ENCODE measurements at regions of chr15 and their contacts with region 1.

Region 1: DNA sequence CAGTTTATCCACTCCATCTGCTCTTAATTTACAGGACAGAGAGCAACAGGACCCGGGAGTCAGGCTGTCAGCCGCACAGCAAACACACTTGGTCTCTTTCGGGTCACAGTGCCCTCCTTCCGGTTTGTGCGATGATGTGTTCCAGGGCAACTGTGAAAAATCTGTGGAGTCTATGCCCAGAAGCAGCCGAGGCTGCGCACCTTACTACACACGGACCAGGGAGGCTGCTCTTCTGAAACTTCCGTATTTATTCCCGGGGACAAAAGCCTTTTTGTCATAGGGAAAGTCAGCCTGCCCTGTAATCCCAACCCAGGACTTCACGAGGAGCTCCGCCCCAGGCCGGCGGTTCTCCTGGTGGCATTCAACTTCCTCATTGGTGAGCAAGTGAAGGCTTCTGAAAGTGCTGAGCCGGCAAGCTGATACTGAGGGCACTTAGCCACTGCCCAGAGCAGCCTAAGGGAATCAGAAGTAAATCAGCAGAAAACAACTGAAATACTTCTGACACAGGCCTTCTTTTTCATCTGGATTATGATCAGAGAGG is 126.5 kb downstream of the FMN1 start:
- DNase-seq: peak; percentile 73
- H3K4me3 ChIP-seq: peak overlapping the region; percentile 8 to 23 (median 9)
- H3K27ac ChIP-seq: peak overlapping the region; percentile 84
- H3K4me1 ChIP-seq: peaks cover 33% of the 10 kb centered on the region
- H3K27me3 ChIP-seq: no peaks in the 10 kb centered on the region
- CTCF ChIP-seq: no peak

Region 2: DNA sequence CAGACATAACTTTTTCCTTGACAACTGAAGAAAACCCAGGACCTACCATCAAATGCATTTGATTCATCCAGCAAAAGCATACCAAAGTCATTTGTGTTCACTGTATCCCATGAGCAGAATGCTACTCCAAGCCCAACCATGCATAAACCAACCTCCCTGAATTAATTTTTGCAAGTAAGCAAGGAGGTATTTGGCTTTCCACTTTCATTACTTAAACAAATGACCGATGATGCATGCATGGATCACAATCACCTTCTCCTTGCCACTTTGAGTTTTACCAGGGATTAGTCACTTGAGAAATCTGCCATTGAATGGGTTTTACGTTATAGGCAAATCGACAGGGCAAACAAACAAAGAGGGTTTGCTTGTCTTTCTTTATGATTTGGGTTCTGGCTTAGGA is 88.3 kb before region 1 on chr15:
- CTCF ChIA-PET with region 1: no interaction called
- dilution Hi-C with region 1: loop called (anchors 5 kb)
- in situ Hi-C with region 1: no loop called
- intact Hi-C with region 1: no loop called
- DNase-seq: peak; percentile 61
- H3K4me3 ChIP-seq: no peak overlapping the region
- H3K27ac ChIP-seq: no peak overlapping the region
- H3K4me1 ChIP-seq: no peaks in the 10 kb centered on the region
- H3K27me3 ChIP-seq: no peaks in the 10 kb centered on the region
- CTCF ChIP-seq: no peak

Region 3: DNA sequence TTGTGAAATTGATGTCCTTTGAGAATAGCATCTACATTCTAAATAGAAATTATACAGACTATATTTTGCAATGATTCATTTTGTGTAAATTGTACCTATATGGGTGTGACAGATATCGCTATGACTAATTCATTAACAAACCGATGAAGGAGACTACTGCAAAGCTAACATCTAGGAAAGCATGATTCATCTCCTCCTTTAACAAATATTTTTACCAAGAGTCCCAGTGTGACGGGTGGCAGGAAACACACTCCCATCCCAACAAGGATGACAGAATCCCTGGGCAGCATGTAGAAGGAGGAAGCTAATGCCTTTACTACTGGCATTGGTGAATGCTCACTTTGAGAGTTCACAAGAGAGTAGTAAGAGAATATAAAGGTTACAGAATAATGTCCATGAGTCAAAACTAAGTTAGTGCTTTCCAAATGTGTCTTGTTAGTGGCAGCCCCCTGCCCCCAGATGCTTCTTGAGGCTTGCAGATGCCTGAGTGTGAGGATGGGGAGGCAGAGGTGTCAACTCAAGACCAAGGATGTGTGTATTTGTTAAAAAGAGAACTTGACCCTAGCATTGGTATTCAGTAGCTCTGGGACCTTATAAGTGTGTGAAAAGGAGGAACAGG is 54.1 kb before region 1 on chr15:
- CTCF ChIA-PET with region 1: interaction called, 3 read pairs
- dilution Hi-C with region 1: loop called (anchors 5 kb)
- in situ Hi-C with region 1: no loop called
- intact Hi-C with region 1: no loop called
- DNase-seq: peak; percentile 88
- H3K4me3 ChIP-seq: no peak overlapping the region
- H3K27ac ChIP-seq: peak overlapping the region; percentile 26
- H3K4me1 ChIP-seq: peaks cover 10% of the 10 kb centered on the region
- H3K27me3 ChIP-seq: no peaks in the 10 kb centered on the region
- CTCF ChIP-seq: no peak

Region 4: GRCh38 chr15:33029109-33029652 is 38.8 kb before region 1 on chr15:
- CTCF ChIA-PET with region 1: no interaction called
- dilution Hi-C with region 1: no loop called
- in situ Hi-C with region 1: loop called (anchors 5 to 10 kb)
- intact Hi-C with region 1: no loop called
- DNase-seq: no peak
- H3K4me3 ChIP-seq: no peak overlapping the region
- H3K27ac ChIP-seq: no peak overlapping the region
- H3K4me1 ChIP-seq: peaks cover 8% of the 10 kb centered on the region
- H3K27me3 ChIP-seq: no peaks in the 10 kb centered on the region
- CTCF ChIP-seq: no peak